ENCODE measurements at regions of chr13 and their contacts with region 1.

Region 1: GRCh38 chr13:80132741-80133601 is 208.0 kb downstream of the SPRY2 start:
- DNase-seq: peak; percentile 63 to 75 (median 73)
- ATAC-seq: peak; percentile 95 to 96
- H3K4me3 ChIP-seq: peak overlapping the region; percentile 44
- H3K27ac ChIP-seq: peak overlapping the region; percentile 99
- H3K4me1 ChIP-seq: no peaks in the 10 kb centered on the region
- H3K27me3 ChIP-seq: no peaks in the 10 kb centered on the region

Region 2: DNA sequence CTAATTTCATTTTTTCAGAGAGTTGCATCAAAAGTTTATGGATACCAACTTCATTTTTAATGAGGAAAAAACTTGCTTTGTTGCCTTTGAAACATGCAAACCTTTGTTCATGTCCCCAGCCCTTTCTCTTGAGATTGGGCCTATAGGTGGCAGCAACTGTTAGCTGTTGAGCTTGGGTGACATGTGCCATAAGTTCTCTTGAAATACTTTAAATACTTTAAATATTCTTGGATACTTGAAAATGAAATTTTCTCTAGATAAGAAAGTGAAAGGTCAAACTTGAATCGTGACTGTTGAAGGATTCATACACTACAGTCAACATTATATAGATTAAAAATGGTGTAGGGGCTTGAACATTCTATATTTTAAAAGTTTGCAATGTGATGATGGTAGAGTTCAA is 357.1 kb before region 1 on chr13:
- intact Hi-C with region 1: loop called in 1 of 4 experiments (anchors 5 kb)
- DNase-seq: no peak
- ATAC-seq: peak in 1 of 2 donors; percentile 56
- H3K4me3 ChIP-seq: no peak overlapping the region
- H3K27ac ChIP-seq: no peak overlapping the region
- H3K4me1 ChIP-seq: no peaks in the 10 kb centered on the region
- H3K27me3 ChIP-seq: no peaks in the 10 kb centered on the region

Region 3: GRCh38 chr13:80029170-80029569 is 103.8 kb before region 1 on chr13:
- intact Hi-C with region 1: loop called in 1 of 4 experiments (anchors 5 kb)
- DNase-seq: no peak
- ATAC-seq: peak in 1 of 2 donors; percentile 57
- H3K4me3 ChIP-seq: no peak overlapping the region
- H3K27ac ChIP-seq: no peak overlapping the region
- H3K4me1 ChIP-seq: no peaks in the 10 kb centered on the region
- H3K27me3 ChIP-seq: no peaks in the 10 kb centered on the region